Esophagus muscularis mucosa (tissue), 4 donors: ENCODE measurements at regions of chr17 and their contacts with region 1.

Region 1: GRCh38 chr17:145671-146541 is 8.5 kb downstream of the SCGB1C2 start:
- DNase-seq: no peak
- H3K4me3 ChIP-seq: no peak overlapping the region
- H3K27ac ChIP-seq: no peak overlapping the region
- H3K4me1 ChIP-seq: peaks cover 3 to 13% (median 8%) of the 10 kb centered on the region in 4 donors
- H3K27me3 ChIP-seq: peaks cover 0 to 6% (median 0%) of the 10 kb centered on the region in 4 donors
- CTCF ChIP-seq: no peak
- EP300 ChIP-seq: no peak
- POLR2A ChIP-seq: no peak

Region 2: GRCh38 chr17:385926-386876 is 240.3 kb after region 1 on chr17:
- intact Hi-C with region 1: loop called (anchors 5 kb)
- DNase-seq: no peak
- H3K4me3 ChIP-seq: peak overlapping the region; percentile 61 to 91 (median 69)
- H3K27ac ChIP-seq: peak overlapping the region; percentile 67 to 83 (median 76)
- H3K4me1 ChIP-seq: peaks cover 11 to 25% (median 24%) of the 10 kb centered on the region in 4 donors
- H3K27me3 ChIP-seq: peaks cover 0 to 58% (median 7%) of the 10 kb centered on the region in 4 donors
- CTCF ChIP-seq: peak; percentile 72 to 86 (median 73)
- EP300 ChIP-seq: no peak
- POLR2A ChIP-seq: no peak